ENCODE measurements at regions of chr6 and their contacts with region 1.

Region 1: DNA sequence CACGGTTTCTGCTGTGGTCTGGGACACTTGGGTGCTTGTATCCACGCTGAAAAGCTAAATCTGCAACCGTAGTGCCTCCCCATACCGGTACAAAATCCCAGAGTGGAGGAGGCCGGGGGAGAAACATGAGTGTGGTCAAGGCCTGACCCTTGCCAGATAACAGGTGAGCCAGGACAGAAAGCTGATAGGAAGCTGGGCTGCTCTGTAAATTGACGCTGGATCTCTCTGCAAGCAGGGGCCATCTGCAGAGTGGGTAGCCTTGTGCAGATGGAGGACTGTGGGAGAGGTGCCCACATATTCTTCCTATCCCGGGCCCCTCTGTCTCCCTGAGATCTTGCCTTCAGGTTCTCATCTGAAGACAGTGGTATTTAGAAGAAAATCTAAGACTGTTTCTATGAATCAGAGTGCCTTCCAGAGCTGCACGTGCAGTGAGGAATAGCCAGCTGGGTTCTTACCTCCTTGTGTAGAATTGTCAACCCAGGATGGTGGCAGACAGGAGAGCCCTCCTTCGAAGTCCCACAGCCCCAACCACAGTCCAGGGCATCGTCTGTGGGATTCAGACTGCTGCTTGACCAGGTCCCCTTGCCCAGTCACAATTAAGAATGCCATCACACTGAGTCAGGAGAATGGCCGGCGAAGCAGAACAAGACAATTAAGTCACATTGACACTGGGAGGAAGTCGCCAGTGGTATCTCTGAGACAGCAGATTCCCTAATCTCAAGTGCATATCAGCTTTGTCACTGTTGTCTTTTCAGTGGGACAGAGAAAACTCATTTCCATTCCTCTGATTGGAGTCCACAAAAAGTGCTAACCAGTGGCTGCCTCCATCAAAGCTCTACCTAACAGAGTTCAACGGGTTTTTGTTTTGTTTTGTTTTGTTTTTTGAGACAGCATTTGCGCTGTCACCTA is 100.0 kb upstream of the RIPOR2 start:
- DNase-seq: no peak
- ATAC-seq: peak; percentile 71
- H3K4me3 ChIP-seq: peak overlapping the region; percentile 52; the same call in 1 of the 2 replicates
- H3K27ac ChIP-seq: peak overlapping the region; percentile 80
- H3K4me1 ChIP-seq: peaks cover 19% of the 10 kb centered on the region
- H3K27me3 ChIP-seq: no peaks in the 10 kb centered on the region
- CTCF ChIP-seq: no peak
- EP300 ChIP-seq: no peak
- POLR2A ChIP-seq: no peak
- RAD21 ChIP-seq: no peak

Region 2: DNA sequence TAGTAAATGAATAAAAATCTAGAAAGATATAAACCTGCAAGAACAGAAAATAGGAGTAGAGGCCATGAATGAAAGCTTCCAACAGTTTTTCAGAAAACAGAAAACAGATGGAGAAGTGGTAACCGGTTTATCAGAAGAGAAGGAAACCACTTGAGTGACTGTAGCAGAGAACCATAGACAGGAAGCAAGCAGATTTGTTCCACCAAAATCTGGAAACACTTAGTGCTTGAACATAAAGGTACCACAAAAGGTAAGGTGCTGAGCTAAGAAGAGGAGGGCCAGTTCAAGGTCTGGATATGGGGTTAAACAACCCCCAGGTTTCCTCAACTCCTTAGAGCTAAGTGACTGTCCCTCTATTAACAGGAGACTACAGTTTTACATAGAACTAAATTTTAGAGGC is 380.6 kb before region 1 on chr6:
- CTCF ChIA-PET with region 1: no interaction called
- POLR2A ChIA-PET with region 1: no interaction called
- RAD21 ChIA-PET with region 1: no interaction called
- SMC1A ChIA-PET with region 1: no interaction called
- in situ Hi-C with region 1: no loop called
- intact Hi-C with region 1: no loop called
- DNase-seq: no peak
- ATAC-seq: no peak
- H3K4me3 ChIP-seq: no peak overlapping the region
- H3K27ac ChIP-seq: no peak overlapping the region
- H3K4me1 ChIP-seq: no peaks in the 10 kb centered on the region
- H3K27me3 ChIP-seq: no peaks in the 10 kb centered on the region
- CTCF ChIP-seq: no peak
- EP300 ChIP-seq: no peak
- POLR2A ChIP-seq: no peak
- RAD21 ChIP-seq: no peak

Region 3: GRCh38 chr6:25053875-25054371 is 18.1 kb after region 1 on chr6:
- CTCF ChIA-PET with region 1: interaction called, 62 read pairs
- POLR2A ChIA-PET with region 1: interaction called, 69 read pairs
- RAD21 ChIA-PET with region 1: interaction called, 30 read pairs
- SMC1A ChIA-PET with region 1: interaction called, 304 read pairs
- in situ Hi-C with region 1: no loop called
- intact Hi-C with region 1: no loop called
- DNase-seq: no peak
- ATAC-seq: peak; percentile 93
- H3K4me3 ChIP-seq: no peak overlapping the region
- H3K27ac ChIP-seq: peak overlapping the region; percentile 41
- H3K4me1 ChIP-seq: peaks cover 26% of the 10 kb centered on the region
- H3K27me3 ChIP-seq: no peaks in the 10 kb centered on the region
- CTCF ChIP-seq: peak in 2 of 3 experiments; percentile 16 to 20; a peak in 2 of 6 replicates
- EP300 ChIP-seq: peak in 1 of 2 experiments; percentile 29; a peak in 1 of 4 replicates
- POLR2A ChIP-seq: no peak
- RAD21 ChIP-seq: peak; percentile 21; the same call in 1 of the 2 replicates

Region 4: GRCh38 chr6:25061289-25061936 is 25.6 kb after region 1 on chr6:
- CTCF ChIA-PET with region 1: interaction called, 204 read pairs
- POLR2A ChIA-PET with region 1: interaction called, 69 read pairs
- RAD21 ChIA-PET with region 1: interaction called, 52 read pairs
- SMC1A ChIA-PET with region 1: interaction called, 304 read pairs
- in situ Hi-C with region 1: no loop called
- intact Hi-C with region 1: no loop called
- DNase-seq: no peak
- ATAC-seq: no peak
- H3K4me3 ChIP-seq: no peak overlapping the region
- H3K27ac ChIP-seq: no peak overlapping the region
- H3K4me1 ChIP-seq: no peaks in the 10 kb centered on the region
- H3K27me3 ChIP-seq: no peaks in the 10 kb centered on the region
- CTCF ChIP-seq: no peak
- EP300 ChIP-seq: no peak
- POLR2A ChIP-seq: no peak
- RAD21 ChIP-seq: no peak